Right ventricle myocardium superior (tissue), 1 donor: ENCODE measurements at regions of chr1 and their contacts with region 1.

Region 1: DNA sequence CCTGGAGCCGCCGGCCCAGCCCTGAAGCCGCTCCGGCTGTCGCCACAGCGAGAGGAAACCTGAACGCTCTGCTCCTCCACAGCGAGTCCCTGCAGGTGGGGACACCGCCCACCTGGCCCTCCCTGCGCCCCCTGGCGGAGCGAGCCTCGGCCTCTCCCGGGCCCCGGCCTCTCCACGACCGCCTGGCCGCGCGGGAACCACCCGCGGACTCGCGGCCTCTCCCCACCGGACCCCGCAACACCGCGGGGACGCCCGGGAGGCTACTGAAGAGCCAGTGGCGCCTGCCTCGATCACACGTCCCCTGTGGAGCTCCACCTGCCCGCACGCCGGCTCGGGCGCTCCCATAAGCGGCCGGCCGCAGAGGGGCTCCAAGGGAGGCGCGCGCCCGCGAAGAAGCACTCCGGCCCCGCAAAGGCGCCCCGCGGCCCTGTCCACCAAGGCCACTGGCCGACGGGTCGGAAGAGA is 109.6 kb downstream of the KCNN3 start:
- DNase-seq: peak; percentile 75
- ATAC-seq: peak; percentile 97

Region 2: DNA sequence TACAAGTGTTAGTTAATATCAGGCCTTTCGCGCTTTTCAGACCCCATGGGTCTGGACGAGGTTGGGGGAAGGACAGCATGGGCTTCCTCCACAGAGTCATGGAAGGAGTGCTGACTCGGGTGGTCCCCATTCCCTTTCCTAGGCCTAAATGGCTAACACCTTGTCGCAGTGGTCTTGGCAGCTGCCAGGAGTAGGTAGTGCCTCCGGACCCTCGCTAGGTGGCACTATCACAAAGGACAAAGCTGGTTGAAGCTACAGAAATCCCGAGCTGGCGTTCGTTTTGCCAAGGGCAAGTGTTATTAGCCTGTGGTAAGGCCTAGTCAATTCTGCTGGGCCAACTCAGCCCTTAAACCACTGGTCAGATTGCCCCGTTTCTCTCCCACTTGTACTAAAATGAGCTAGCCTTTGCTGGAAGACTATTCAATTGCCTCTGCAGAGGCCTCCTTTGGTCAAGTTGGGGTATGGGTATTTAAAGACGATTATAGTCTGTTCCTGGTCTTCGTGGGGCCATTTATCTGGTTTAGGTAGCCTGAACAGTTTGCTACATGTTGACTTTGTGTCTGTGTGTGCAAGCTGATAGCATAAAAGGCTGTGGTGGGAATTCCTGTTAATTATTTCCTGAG is 200.9 kb before region 1 on chr1:
- intact Hi-C with region 1: loop called (anchors 10 kb)
- DNase-seq: peak; percentile 85
- ATAC-seq: peak; percentile 80

Region 3: GRCh38 chr1:154578058-154578418 is 182.5 kb before region 1 on chr1:
- intact Hi-C with region 1: no loop called
- DNase-seq: no peak
- ATAC-seq: peak; percentile 64

Region 4: GRCh38 chr1:154669464-154670282 is 90.8 kb before region 1 on chr1:
- intact Hi-C with region 1: loop called (anchors 5 kb)
- DNase-seq: peak; percentile 80
- ATAC-seq: peak; percentile 99

Region 5: DNA sequence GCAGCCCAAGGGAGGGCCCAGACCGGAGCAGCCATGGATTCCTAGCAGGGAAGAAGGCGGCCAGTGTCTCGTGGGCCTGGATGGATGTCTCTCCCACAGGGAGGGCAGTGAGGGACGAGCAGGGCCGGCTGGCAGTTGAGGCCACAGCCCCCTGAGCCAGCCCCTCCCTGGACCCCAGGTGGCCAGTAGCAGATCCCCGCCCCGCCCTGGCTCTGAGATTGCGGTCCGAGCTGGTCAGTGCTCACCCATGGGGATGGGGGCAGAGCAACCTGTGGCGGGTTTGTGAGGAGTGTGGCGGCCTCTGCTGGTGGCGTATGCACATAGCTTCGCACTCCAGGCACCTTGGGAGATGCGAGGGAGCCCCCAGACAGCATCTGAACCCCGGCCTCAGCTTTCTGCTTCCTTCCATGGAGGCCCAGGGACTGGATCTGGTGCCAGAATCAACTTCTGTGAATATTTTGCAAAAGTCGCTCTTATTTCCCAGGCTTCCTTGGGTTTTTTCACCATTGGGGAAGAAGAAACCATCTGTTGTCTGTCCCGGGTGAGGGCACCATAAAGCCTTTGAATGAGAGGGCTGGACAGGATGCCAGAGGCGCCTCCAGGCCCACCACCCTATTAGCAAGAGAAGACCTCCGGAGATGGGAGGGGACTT is 118.0 kb after region 1 on chr1:
- intact Hi-C with region 1: loop called (anchors 5 kb)
- DNase-seq: peak; percentile 87
- ATAC-seq: peak; percentile 98